ENCODE measurements at regions of chr4 and their contacts with region 1.

Region 1: GRCh38 chr4:47471064-47471463 is 7.6 kb upstream of the COMMD8 start:
- DNase-seq: no peak
- H3K4me3 ChIP-seq: no peak overlapping the region
- H3K27ac ChIP-seq: no peak overlapping the region
- H3K4me1 ChIP-seq: no peaks in the 10 kb centered on the region
- H3K27me3 ChIP-seq: no peaks in the 10 kb centered on the region
- CTCF ChIP-seq: no peak
- POLR2A ChIP-seq: no peak

Region 2: DNA sequence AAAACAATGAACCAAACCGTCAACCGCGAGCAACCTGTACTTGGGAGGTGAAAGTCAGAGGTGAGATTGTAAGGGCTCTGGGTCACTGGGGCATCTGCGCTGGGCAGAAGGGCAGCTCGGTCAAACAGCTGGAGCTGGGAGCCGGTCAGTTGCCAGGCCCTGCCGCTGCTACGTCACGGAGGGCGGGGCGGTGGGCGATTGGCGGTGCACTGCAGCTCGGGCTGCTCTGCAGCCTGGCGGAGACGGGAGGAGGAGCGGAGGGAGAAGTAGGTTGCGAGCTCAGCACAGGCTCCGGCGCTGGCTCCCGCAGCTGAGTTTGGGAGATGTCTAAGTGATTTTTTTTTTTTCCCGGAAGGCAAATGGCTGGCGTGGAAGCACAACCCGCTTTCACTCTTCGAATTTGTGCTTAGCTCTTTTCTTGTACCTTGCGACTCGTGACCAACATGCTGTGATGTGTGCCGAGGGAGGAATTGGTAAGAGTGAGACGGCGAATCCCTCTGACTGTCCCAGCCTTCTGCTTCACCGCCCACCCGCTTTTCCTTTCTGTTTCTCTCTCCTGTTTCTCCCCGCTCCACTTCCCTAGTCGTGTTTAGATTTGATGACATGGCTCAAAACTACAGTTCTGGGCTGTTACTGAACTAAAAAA is 14.1 kb after region 1 on chr4 and contains the start of gene ATP10D:
- CTCF ChIA-PET with region 1: interaction called, 18 read pairs
- POLR2A ChIA-PET with region 1: interaction called, 5 read pairs
- dilution Hi-C with region 1: no loop called
- intact Hi-C with region 1: no loop called
- DNase-seq: peak; percentile 95
- H3K4me3 ChIP-seq: peak within 1 kb of the TSS; percentile 75 to 83 (median 79)
- H3K27ac ChIP-seq: peak within 1 kb of the TSS; percentile 77
- H3K4me1 ChIP-seq: peaks cover 2% of the 10 kb centered on the region
- H3K27me3 ChIP-seq: no peaks in the 10 kb centered on the region
- CTCF ChIP-seq: no peak
- POLR2A ChIP-seq: peak; percentile 94
- total RNA-seq, gene ATP10D: 30.9 and 34.1 TPM in 2 replicates

Region 3: DNA sequence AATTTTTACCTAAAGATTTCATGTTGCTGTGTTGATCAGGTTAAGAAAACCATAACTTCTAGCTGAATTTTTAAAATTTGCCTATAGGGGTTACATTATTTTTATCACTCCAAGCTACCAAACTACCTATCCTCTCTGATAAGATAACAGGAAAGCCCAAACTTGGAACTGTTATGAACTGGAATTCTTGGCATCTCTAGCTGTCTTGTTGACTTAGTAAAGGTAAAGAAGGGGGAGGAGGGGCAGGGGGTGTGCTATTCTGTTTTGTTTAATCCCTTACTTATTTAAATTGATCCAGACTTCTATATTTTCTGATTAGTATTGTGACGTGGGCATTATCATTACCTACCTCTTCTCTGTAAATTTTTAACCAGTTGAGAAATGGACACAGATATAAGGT is 925.0 kb after region 1 on chr4:
- CTCF ChIA-PET with region 1: no interaction called
- POLR2A ChIA-PET with region 1: no interaction called
- dilution Hi-C with region 1: no loop called
- intact Hi-C with region 1: no loop called
- DNase-seq: no peak
- H3K4me3 ChIP-seq: no peak overlapping the region
- H3K27ac ChIP-seq: no peak overlapping the region
- H3K4me1 ChIP-seq: no peaks in the 10 kb centered on the region
- H3K27me3 ChIP-seq: no peaks in the 10 kb centered on the region
- CTCF ChIP-seq: no peak
- POLR2A ChIP-seq: no peak

Measured in endothelial cell of umbilical vein (primary cell).